ENCODE measurements at regions of chr9 and their contacts with region 1.

Region 1: DNA sequence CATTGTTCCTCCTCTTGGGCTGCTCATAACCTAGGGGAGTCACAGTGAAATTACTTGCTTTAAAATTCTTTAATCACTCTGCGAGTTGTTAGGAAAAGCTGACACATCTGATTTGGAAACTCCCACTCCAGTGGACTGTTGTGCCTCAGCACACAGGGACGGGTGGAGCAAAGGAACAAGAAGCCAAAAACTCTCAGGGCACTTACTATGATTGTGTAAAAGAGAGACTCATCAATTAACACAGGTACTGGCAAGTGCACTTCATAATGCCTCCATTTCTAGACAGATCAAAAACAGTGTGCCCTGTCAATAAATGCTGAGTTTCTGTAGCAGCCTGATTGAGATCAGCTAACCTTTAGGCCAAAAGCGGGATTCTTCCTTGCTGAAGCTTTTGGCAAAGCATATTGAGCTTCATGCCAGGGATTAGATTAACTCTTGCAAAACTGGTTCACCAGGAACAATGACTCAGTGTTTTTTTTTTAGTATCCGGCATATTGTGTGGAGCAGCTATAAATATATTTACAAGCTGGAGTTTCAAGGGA is 55.9 kb downstream of the TMC1 start:
- DNase-seq: peak in 2 of 5 donors; percentile 22 to 48
- ATAC-seq: peak; percentile 43 to 84 (median 78)
- H3K4me3 ChIP-seq: peak overlapping the region in 7 of 12 donors; percentile 15 to 51 (median 34)
- H3K27ac ChIP-seq: peak overlapping the region; percentile 26 to 86 (median 60)
- H3K4me1 ChIP-seq: peaks cover 0 to 52% (median 23%) of the 10 kb centered on the region in 12 donors
- H3K27me3 ChIP-seq: no peaks in the 10 kb centered on the region
- CTCF ChIP-seq: no peak
- POLR2A ChIP-seq: no peak

Region 2: DNA sequence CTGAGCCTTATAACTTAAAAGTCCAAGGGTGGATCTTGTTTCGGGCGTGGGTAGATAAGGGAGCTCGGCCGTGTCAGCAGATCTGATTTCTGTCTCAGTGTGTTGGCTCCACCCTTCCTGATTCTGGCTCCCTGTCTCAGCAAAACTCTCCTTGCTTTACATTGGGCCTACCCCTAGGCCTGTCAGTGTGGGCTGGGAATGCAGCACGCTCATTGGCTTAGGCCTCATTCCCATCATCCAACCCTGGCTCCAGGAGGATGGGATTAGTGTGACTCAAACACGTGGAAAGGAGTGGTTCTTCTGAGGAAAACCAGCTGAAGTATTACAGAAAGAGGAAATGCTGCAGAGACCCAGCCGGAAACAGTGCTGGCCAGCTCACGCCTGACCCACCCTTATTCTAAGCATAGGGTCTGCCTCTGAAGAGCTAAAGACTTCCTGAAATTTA is 272.2 kb before region 1 on chr9:
- intact Hi-C with region 1: loop called in 1 of 10 experiments (anchors 5 kb)
- DNase-seq: peak; percentile 79 to 89 (median 85)
- ATAC-seq: peak; percentile 98 to 100 (median 99)
- H3K4me3 ChIP-seq: peak overlapping the region in 9 of 12 donors; percentile 22 to 70 (median 42)
- H3K27ac ChIP-seq: peak overlapping the region; percentile 9 to 91 (median 80)
- H3K4me1 ChIP-seq: peaks cover 0 to 33% (median 1%) of the 10 kb centered on the region in 12 donors
- H3K27me3 ChIP-seq: no peaks in the 10 kb centered on the region
- CTCF ChIP-seq: no peak
- POLR2A ChIP-seq: peak in 1 of 2 donors; percentile 65

Region 3: DNA sequence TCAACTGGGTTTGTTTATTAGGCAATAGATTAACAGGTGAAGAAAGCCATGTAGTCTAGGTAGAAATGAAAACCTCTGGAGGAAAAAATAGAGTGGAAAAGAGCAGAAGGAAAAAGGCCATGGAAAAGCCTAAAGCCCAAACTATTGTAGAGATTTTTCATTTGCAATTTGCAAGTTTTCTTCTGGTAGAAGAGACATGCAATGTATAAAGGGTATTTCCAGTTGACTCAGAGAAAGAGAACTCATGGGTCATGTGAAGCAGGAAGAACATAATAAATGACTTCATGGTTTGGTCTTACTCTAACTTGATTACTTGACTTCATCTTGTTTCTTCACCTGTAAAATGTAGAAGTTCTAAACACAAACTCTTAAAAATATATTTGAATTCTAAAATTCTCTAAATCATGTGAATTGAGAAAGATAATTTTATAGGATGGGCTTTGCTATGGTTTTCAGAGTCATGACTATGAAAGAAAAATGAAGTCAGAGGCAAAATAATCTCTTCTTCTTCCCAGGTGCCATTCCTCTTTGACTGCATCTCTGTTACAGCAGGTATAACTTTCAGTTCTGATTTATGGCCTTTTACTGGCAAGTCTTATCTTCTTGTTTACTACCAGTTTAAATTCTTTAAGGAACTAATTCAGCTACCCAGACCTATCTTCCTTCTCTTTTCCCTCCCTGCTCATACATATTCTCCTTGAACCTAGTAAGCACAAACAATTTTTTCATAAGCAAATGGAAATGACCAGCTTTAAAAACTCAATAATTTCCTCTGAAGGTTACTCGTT is 103.6 kb before region 1 on chr9:
- intact Hi-C with region 1: loop called in 1 of 10 experiments (anchors 5 kb)
- DNase-seq: no peak
- ATAC-seq: no peak
- H3K4me3 ChIP-seq: no peak overlapping the region
- H3K27ac ChIP-seq: peak overlapping the region in 1 of 12 donors; percentile 48
- H3K4me1 ChIP-seq: peaks cover 0 to 24% (median 7%) of the 10 kb centered on the region in 12 donors
- H3K27me3 ChIP-seq: no peaks in the 10 kb centered on the region
- CTCF ChIP-seq: no peak
- POLR2A ChIP-seq: no peak

Region 4: DNA sequence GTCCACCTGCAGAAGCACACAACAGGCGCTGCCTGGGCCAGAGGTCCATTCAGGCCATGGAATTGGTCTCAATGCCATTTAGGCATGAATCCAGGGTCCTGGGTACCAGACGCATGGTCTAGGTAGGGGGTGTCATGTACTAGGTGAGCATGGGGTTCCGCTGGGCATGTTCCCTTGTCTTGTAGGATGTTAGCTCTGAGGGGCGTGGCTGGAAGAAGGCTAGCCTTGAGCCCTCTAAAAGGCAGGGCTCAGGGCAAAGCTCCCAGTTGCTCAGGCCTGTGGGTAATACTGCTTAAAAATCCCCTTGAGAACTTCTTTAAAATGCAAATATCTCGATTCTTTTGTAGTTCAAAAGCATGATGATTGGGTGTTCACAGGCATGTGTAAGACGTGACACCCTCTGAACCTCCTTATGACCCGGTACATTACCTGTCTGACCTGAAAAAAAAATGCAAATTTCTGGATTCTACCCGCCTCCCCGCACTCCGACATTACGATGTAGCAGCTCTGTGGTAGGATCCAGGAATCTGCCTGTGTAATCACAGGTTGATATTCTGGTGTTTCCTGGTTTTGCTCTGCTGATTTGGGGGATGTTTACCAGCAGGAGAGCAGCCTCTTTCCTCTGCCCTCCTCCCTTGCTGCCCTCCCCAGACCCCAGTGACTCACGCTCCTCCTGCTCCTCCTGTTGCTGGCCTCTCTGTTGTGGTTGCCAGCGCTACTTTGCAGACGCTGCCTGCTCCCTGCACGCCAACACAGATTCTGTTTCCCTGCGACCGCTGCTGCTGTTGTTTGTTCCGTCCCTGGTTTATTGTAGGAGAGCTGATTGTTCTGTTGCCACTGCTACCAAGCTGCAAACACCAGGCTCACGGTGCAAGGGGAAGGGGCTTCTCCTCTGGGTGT is 50.1 kb before region 1 on chr9:
- intact Hi-C with region 1: loop called in 3 of 10 experiments (anchors 5 to 10 kb)
- DNase-seq: peak; percentile 44 to 77 (median 69)
- ATAC-seq: peak; percentile 90 to 95 (median 92)
- H3K4me3 ChIP-seq: peak overlapping the region in 10 of 12 donors; percentile 4 to 44 (median 32)
- H3K27ac ChIP-seq: peak overlapping the region in 7 of 12 donors; percentile 1 to 66 (median 49)
- H3K4me1 ChIP-seq: peaks cover 0 to 27% (median 15%) of the 10 kb centered on the region in 12 donors
- H3K27me3 ChIP-seq: no peaks in the 10 kb centered on the region
- CTCF ChIP-seq: no peak
- POLR2A ChIP-seq: no peak

Measured in heart left ventricle (tissue), 16 donors.